Activated naive CD4-positive, alpha-beta T cell treated with anti-CD3 and anti-CD28 coated beads for 36 hours (primary cell): ENCODE measurements at regions of chr5 and their contacts with region 1.

Region 1: DNA sequence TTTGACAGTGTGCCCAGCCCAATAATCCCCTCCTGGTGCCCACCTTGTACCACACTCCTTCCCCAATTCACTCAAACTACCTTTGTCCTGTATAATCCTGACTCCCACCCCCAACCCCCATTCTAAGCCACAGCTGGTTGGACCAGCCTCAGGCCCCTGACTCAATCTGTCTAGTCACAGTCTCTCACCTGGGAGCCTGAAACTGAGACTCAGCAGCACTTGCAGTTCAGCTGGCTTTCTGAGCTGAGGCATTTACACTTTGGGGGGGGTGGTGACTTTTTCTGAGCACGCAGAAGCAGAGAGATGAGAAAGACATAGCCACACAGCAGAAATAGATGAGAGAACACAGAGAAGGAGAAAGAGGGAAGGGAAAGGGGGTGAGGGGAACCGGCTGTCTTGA is 247.3 kb downstream of the MAN2A1 start:
- DNase-seq: peak; percentile 81
- H3K4me3 Mint-ChIP-seq: peak overlapping the region; percentile 17
- H3K27ac Mint-ChIP-seq: peak overlapping the region; percentile 80
- H3K4me1 Mint-ChIP-seq: peaks cover 29% of the 10 kb centered on the region
- H3K27me3 Mint-ChIP-seq: no peaks in the 10 kb centered on the region

Region 2: DNA sequence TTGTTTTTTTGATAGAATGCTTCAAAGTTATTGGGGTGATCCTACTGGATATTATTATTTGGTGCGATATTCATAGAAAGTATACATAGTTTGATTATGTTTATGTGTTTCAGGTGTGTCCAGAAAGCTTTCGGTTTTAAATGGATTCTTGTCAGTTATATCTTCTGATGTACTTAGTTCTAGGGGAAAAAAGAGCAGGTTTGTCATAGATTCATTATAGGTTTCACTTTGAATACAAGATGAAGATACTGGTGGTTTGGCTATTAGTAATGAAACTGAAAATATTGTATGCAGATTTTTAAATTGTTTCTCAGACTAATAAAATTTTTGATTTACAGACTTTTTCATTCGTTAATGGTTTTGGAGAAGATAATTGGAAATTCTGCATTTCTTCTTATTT is 148.4 kb before region 1 on chr5:
- CTCF ChIA-PET with region 1: no interaction called
- intact Hi-C with region 1: loop called (anchors 5 kb)
- DNase-seq: no peak
- H3K4me3 Mint-ChIP-seq: no peak overlapping the region
- H3K27ac Mint-ChIP-seq: no peak overlapping the region
- H3K4me1 Mint-ChIP-seq: peaks cover 20% of the 10 kb centered on the region
- H3K27me3 Mint-ChIP-seq: no peaks in the 10 kb centered on the region

Region 3: DNA sequence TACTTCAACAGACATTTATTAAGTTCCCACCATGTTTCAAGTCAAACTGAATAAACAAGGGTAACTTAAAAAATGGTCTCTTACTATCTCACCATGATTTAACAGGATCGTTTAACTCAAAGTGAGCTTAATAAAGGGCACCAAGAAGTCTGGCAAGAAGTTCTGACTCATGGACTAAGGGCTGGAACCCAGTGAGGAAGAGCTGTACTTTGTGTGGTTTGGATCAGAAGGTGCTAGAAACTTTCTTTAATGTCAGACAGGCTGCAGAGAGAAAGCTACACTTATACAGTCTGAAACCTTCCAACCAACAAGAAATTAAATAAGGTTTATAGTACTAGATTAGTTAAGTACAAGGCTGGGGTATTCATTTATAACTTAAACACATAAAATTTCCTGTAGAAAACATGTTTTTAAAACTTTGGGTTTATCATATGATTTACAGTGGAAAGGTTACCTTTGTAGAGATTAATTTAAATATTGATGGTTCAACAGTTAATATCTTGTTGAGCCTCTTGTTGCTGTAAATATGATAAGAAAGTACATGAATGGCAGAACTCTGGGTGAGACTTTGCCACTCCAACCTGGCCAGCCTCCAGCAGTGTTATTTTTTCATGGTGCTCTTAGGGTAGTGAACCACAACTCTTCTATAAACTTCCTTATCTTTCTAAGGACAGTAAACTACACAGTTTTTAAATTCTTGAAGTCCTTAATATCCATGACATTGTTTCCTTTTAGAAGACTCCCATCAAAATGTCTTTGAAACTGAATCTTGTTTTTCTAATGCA is 84.4 kb before region 1 on chr5:
- CTCF ChIA-PET with region 1: no interaction called
- intact Hi-C with region 1: loop called (anchors 1 kb)
- DNase-seq: peak; percentile 30
- H3K4me3 Mint-ChIP-seq: no peak overlapping the region
- H3K27ac Mint-ChIP-seq: peak overlapping the region; percentile 54
- H3K4me1 Mint-ChIP-seq: peaks cover 75% of the 10 kb centered on the region
- H3K27me3 Mint-ChIP-seq: no peaks in the 10 kb centered on the region

Region 4: GRCh38 chr5:109868737-109869136 is 68.3 kb before region 1 on chr5:
- CTCF ChIA-PET with region 1: no interaction called
- intact Hi-C with region 1: loop called (anchors 2 kb)
- DNase-seq: no peak
- H3K4me3 Mint-ChIP-seq: no peak overlapping the region
- H3K27ac Mint-ChIP-seq: peak overlapping the region; percentile 56
- H3K4me1 Mint-ChIP-seq: peaks cover 38% of the 10 kb centered on the region
- H3K27me3 Mint-ChIP-seq: no peaks in the 10 kb centered on the region

Region 5: DNA sequence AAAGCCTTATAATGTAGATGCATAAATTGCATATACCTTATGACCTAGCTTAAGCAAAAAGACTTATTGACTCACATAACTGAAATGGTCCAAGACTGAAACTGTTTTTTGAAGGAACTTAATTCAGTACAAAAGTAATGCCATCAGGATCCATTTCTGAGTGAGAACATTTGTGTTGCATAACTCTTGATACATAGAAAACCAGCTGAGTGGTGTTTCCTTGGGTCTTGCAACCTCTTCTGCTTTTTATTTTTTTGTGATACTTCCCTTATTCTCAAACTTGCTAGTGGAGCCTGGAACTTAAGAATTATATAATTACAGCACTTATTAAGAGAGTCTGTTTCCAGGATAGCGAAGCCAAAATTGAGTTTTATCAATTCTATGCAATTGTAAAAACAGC is 24.8 kb after region 1 on chr5:
- CTCF ChIA-PET with region 1: no interaction called
- intact Hi-C with region 1: loop called (anchors 1 kb)
- DNase-seq: no peak
- H3K4me3 Mint-ChIP-seq: no peak overlapping the region
- H3K27ac Mint-ChIP-seq: no peak overlapping the region
- H3K4me1 Mint-ChIP-seq: peaks cover 27% of the 10 kb centered on the region
- H3K27me3 Mint-ChIP-seq: no peaks in the 10 kb centered on the region

Region 6: GRCh38 chr5:109996246-109996645 is 59.2 kb after region 1 on chr5:
- CTCF ChIA-PET with region 1: no interaction called
- intact Hi-C with region 1: no loop called
- DNase-seq: no peak
- H3K4me3 Mint-ChIP-seq: no peak overlapping the region
- H3K27ac Mint-ChIP-seq: no peak overlapping the region
- H3K4me1 Mint-ChIP-seq: peaks cover 12% of the 10 kb centered on the region
- H3K27me3 Mint-ChIP-seq: no peaks in the 10 kb centered on the region

Region 7: DNA sequence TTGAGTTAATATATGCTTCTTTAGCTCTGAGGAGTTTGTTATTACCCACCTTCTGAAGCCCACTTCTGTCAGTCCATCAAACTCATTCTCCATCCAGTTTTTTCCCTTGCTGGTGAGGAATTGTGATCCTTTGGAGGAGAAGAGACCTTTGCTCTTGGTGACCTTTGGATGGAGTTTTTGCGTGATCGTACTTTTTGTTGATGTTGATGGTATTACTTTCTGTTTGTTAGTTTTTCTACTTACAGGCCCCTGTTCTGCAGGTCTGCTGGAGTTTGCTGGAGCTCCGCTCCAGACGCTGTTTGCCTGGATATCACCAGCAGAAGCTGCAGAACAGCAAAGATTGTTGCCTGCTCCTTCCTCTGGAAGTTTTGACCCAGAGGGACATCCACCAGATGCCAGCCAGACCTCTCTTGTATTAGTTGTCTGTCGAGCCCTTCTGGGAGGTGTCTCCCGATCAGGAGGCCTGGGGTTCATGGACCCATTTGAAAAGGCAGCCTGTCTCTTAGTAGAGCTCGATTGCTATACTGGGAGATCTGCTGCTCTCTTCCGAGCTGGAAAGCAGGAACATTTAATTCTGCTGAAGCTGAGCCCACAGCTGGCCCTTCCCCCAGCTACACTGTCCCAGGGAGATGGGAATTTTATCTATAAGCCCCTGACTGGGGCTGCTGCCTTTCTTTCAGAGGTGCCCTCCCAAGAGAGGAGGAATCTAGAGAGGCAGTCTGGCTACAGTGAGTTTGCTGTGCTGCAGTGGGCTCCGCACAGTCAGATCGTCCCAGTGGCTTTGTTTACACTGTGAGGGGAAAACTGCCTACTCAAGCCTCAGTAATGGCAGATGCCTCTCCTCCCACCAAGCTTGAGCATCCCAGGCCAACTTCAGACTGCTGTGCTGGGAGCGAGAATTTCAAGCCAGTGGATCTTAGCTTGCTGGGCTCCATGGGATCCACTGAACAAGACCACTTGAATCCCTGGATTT is 198.3 kb after region 1 on chr5:
- CTCF ChIA-PET with region 1: no interaction called
- intact Hi-C with region 1: no loop called
- DNase-seq: no peak
- H3K4me3 Mint-ChIP-seq: no peak overlapping the region
- H3K27ac Mint-ChIP-seq: no peak overlapping the region
- H3K4me1 Mint-ChIP-seq: no peaks in the 10 kb centered on the region
- H3K27me3 Mint-ChIP-seq: peaks cover 2% of the 10 kb centered on the region

Region 8: DNA sequence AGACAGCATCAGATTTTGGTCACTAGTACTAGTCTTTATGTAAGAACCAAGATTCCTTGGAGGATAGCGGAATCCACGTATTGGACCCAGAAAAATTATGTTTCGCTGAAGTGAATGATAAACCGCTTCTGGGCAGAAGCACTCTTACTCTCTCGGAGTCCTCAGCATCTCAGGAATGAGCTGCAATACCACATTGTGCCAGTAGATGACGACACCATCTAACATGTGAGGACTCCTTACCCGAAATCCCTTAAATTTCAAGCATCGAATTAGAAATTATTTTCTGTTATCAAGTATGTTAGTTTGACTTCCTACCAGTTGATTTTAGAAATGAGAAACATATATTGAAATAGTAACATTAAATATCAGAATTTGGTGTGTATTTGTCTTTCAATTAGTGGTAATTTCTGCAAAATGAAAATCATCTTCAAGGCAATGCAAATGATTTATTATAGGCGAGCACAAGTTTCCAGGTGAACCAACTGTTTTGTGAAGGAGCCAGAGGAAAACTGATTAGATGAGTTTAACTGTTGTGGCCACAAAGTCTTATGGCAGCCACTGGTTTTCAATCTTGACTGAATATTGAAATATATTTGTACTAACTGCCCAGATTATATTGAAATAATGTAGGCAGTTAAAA is 1221.2 kb after region 1 on chr5:
- CTCF ChIA-PET with region 1: no interaction called
- intact Hi-C with region 1: no loop called
- DNase-seq: peak; percentile 93
- H3K4me3 Mint-ChIP-seq: no peak overlapping the region
- H3K27ac Mint-ChIP-seq: no peak overlapping the region
- H3K4me1 Mint-ChIP-seq: peaks cover 7% of the 10 kb centered on the region
- H3K27me3 Mint-ChIP-seq: no peaks in the 10 kb centered on the region